Kidney (tissue), 22 donors: ENCODE measurements at regions of chr1 and their contacts with region 1.

Region 1: GRCh38 chr1:223748773-223749733 is 36.7 kb downstream of the CAPN2 start:
- DNase-seq: peak; percentile 73 to 87 (median 79)
- H3K4me3 ChIP-seq: peak overlapping the region; percentile 46 to 64 (median 53)
- H3K27ac ChIP-seq: peak overlapping the region; percentile 63 to 74
- H3K4me1 ChIP-seq: peaks cover 0 to 16% (median 10%) of the 10 kb centered on the region in 3 donors
- H3K27me3 ChIP-seq: no peaks in the 10 kb centered on the region
- CTCF ChIP-seq: peak; percentile 90

Region 2: GRCh38 chr1:223230161-223230881 is 518.7 kb before region 1 on chr1:
- intact Hi-C with region 1: no loop called
- DNase-seq: no peak
- H3K4me3 ChIP-seq: no peak overlapping the region
- H3K27ac ChIP-seq: no peak overlapping the region
- H3K4me1 ChIP-seq: no peaks in the 10 kb centered on the region
- H3K27me3 ChIP-seq: no peaks in the 10 kb centered on the region
- CTCF ChIP-seq: no peak

Region 3: DNA sequence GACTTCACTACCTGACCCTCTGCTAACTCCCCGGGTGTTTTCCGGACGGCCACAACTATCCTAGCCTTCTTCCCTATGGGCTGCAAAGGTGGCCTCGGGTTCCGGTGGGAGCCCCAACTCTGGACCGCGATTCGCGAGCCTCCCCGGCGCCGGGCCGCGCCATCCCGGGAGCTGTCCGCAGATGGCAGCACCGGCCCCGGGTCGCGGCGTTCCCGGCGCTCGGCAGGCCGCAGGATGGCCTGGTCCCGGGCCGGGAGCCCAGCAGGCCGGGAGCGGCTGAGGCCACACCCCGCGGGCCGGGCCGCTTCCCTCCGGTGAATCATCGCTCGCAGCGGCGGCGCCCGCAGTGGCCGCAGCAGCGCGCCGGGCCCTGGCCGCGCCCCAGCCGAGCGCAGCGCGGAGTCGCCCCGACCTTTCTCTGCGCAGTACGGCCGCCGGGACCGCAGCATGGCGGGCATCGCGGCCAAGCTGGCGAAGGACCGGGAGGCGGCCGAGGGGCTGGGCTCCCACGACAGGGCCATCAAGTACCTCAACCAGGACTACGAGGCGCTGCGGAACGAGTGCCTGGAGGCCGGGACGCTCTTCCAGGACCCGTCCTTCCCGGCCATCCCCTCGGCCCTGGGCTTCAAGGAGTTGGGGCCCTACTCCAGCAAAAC is 36.7 kb before region 1 on chr1 and contains the start of gene CAPN2:
- intact Hi-C with region 1: loop called (anchors 5 kb)
- DNase-seq: peak; percentile 78 to 95 (median 86)
- H3K4me3 ChIP-seq: peak within 1 kb of the TSS; percentile 77 to 85 (median 84)
- H3K27ac ChIP-seq: peak within 1 kb of the TSS; percentile 94 to 97
- H3K4me1 ChIP-seq: peaks cover 0 to 43% (median 11%) of the 10 kb centered on the region in 3 donors
- H3K27me3 ChIP-seq: no peaks in the 10 kb centered on the region
- CTCF ChIP-seq: peak; percentile 69
- total RNA-seq, gene CAPN2: 276 TPM